Activated T-helper 1 cell treated with anti-CD3 and anti-CD28 coated beads, Interleukin-12 subunit alpha, Interleukin-12 subunit beta, Interleukin-2, Interleukin-4 antibody, amounts not matched to agents 30 ng/mL and 10 ng/mL and 1 ng/mL, durations not matched to agents 14 hours and 24 hours and 36 hours (primary cell): ENCODE measurements at regions of chr2 and their contacts with region 1.

Region 1: GRCh38 chr2:157596992-157597681 is 31.5 kb downstream of the ACVR1C start:
- DNase-seq: peak; percentile 47
- H3K4me3 Mint-ChIP-seq: peak overlapping the region; percentile 63
- H3K27ac Mint-ChIP-seq: no peak overlapping the region
- H3K4me1 Mint-ChIP-seq: peaks cover 7% of the 10 kb centered on the region
- H3K27me3 Mint-ChIP-seq: peaks cover 39% of the 10 kb centered on the region

Region 2: GRCh38 chr2:157327621-157328500 is 269.3 kb before region 1 on chr2:
- intact Hi-C with region 1: loop called (anchors 1 kb)
- DNase-seq: peak; percentile 74
- H3K4me3 Mint-ChIP-seq: peak overlapping the region; percentile 32
- H3K27ac Mint-ChIP-seq: peak overlapping the region; percentile 26
- H3K4me1 Mint-ChIP-seq: peaks cover 38% of the 10 kb centered on the region
- H3K27me3 Mint-ChIP-seq: no peaks in the 10 kb centered on the region

Region 3: GRCh38 chr2:157433394-157433793 is 163.7 kb before region 1 on chr2:
- intact Hi-C with region 1: loop called (anchors 5 kb)
- DNase-seq: no peak
- H3K4me3 Mint-ChIP-seq: peak overlapping the region; percentile 84
- H3K27ac Mint-ChIP-seq: peak overlapping the region; percentile 96
- H3K4me1 Mint-ChIP-seq: peaks cover 95% of the 10 kb centered on the region
- H3K27me3 Mint-ChIP-seq: no peaks in the 10 kb centered on the region

Region 4: DNA sequence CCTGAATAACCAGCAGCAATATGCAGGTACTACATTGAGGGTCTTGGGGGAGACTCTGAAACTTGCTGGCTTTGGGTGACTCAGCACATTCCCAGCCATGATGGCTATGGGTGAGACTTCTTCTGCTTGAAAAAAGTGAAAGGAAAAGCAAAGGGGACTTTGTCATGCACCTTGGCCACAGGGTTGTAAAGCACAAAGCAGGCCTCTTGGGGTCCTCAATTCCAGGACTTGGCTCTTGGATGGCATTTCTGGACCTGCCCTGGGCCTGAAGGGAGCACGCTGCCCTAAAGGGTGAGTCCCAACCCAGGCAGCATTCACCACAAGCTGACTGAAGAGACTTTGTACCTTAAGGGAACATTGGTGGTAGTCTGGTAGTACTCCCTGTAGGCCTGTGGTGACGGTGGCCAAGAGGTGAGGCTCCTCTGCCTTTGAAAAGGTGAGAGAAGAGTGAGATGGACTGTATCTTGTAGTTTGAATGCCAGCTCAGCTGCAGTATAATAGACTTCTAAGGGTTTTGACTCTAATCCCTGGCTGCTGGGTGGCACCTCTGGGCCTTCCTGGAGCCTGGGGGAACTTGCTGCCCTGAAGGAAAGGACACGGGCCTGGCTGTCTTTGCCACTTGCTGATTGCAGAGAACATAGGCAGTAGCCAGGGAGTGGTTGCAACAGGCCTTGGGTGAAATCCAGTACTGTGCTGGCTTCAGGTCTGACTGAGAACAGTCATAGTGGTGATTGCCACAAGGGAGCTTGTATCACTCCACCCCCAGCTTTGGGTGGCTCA is 116.8 kb before region 1 on chr2:
- intact Hi-C with region 1: no loop called
- DNase-seq: peak; percentile 62
- H3K4me3 Mint-ChIP-seq: peak overlapping the region; percentile 83
- H3K27ac Mint-ChIP-seq: peak overlapping the region; percentile 99
- H3K4me1 Mint-ChIP-seq: peaks cover 95% of the 10 kb centered on the region
- H3K27me3 Mint-ChIP-seq: no peaks in the 10 kb centered on the region